ENCODE measurements at regions of chr13 and their contacts with region 1.

Region 1: GRCh38 chr13:112942689-112943308 is 26.2 kb upstream of the MCF2L start:
- DNase-seq: peak; percentile 96
- ATAC-seq: peak; percentile 96

Region 2: DNA sequence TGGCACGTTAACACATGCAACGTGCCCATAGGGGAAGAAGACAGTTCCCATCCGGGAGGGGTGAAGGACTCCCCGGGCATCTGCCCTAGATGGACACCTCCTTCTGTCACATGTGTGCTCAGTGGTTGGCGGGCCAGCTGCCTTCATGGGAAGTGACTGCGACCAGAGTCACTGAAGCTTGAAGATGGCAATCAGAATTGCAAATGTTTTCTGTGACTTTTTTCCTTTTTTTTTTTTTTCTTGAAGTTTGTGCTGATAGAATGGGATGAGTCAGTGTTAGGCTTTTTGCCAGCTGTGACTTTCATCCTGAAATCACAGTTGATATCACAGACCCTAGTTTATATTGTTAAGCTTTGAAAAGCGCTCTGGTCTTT is 83.0 kb before region 1 on chr13:
- intact Hi-C with region 1: no loop called
- DNase-seq: no peak
- ATAC-seq: peak; percentile 16

Region 3: DNA sequence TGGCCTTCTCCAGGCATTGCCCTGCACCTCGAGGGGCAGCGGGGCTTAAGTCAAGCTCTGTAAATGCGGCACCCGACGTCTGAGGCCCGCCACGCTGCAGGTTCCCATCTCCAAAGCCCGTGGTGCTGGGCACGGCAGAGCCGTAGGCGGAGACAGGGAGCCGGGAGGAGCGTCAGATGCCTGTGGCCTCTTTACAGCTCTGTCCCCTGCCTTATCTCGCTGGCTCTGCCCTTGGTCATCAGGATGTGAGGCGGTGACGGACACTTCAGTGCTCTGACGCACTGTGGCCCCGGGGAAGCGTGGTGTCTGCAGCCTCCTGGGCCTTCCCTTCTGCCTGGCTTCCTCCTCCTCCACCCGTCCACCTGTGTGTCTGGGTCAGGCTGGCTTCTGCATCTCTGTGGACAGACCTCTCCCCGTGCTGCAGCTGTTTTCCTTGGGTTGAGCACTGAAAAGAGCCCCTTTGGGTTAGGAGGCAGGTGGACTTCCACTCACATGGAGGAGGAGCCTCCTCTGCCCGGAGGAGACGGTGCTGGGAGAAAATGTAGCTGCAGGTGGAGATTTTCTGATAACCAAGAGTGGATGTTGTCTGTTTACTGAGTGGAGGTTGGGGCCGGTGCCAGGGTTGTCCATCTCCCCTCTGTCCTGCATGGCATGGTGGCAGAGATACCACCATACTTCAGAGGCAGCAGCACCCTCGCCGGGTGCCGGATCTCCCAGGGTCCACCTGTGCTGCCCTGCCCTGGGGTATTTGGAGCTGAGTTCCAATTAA is 40.8 kb after region 1 on chr13:
- intact Hi-C with region 1: loop called (anchors 5 kb)
- DNase-seq: peak; percentile 61
- ATAC-seq: peak; percentile 67

Region 4: DNA sequence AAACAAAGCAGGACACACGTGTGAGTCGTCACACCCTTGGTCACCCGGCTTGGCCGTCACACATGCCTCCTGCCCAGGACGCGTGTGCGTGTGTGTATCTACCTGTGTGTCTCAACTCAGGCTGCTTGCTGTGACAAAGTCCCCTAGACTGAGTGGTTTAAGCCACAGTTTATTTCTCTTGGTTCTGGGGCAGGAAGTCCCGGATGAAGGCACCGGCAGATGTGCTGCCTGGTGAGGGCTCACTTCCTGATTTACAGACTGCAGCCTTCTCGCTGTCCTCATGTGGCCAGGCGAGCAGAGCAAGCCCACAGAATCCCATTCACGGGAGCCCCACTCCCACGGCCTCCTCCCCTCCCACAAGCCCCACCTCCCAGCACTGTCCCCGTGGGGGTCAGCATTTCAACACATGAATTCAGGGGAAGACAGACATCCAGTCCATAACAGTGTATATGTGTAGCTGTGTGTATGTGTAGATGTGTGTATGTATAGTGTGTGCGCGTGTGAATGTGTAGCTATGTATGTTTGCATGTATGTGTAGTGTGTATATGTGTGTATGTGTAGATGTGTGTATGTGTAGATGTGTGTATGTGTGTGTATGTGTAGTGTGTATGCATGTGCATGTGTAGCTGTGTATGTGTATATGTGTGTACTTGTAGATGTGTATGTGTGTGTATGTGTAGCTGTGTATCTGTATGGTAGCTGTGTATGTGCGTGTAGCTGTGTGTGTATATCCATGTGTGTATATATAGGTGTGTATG is 77.7 kb after region 1 on chr13:
- intact Hi-C with region 1: no loop called
- DNase-seq: no peak
- ATAC-seq: no peak

Region 5: DNA sequence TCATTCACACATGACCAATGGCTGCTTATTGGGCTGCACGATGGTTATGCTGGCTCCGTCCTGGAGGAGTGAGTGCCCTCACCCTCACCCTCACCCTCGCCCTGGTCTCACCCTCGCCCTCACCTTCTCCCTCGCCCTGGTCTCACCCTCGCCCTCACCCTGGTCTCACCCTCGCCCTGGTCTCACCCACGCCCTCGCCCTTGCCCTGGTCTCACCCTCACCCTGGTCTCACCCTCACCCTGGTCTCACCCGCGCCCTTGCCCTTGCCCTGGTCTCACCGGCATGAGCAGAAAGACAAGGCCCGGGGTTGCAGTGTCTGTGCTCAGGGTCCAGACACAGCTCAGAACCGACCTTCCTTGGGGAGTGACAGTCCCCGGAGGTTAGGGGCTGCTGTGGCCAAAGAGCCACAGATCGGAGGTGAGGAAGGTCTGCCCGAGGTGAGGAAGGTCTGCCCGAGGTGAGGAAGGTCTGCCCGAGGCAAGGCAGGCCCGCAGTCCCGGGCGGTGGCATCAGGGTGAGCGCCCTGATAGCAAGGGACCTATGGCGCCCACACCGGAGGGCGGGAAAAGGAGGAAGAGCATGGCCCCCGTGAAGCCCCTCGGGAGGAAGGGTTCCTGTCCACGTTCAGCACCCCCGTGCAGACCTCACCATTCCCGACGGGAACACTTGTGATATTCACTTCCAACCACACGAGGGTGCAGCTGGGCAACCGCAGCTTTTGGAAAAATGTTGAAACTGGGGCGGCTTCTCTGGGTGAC is 91.8 kb after region 1 on chr13:
- intact Hi-C with region 1: loop called (anchors 2 kb)
- DNase-seq: no peak
- ATAC-seq: peak; percentile 78

Measured in Right ventricle myocardium inferior (tissue), 1 donor.